HCT116 (cell line): ENCODE measurements at regions of chr11 and their contacts with region 1.

Region 1: DNA sequence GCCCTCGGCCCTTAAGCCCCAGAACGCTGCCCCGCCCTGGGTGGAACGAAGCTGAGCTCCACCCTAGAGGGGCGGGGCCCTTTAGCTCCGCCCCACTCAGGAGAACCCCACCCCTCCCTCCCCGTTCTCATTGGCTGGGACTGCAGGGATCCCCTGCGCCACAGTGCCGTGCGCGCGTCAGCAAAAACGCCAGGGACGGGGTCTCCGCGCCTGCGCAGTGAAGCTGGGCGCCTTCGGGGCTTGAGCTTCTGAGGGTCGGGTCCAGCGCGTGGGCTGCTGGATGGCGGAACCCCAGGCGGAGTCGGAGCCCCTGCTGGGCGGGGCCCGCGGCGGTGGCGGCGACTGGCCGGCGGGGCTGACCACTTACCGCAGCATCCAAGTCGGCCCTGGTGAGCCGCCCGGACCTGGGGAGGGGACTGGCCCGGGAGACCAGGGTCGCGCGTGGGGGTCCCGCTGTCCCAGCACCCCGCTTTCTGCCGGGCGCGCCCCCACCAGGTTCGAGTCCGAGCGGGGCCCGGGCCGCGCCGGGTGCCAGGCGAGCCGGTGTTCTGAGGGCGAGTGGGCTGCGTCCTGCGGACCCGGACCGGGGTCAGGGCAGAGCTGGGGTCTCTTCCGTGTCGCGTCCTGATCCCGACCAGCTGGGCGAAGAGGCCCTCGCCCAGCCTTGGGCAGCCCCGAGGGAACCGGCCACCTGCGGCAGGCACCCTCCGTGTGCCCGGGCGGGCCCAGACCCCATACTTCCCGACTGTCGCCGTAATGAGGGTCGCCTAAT is at the start of gene TPCN2:
- DNase-seq: peak; percentile 91
- ATAC-seq: peak; percentile 87
- H3K4me3 ChIP-seq: peak within 1 kb of the TSS; percentile 73 to 97
- H3K27ac ChIP-seq: peak within 1 kb of the TSS; percentile 91
- H3K4me1 ChIP-seq: peaks cover 10 to 28% of the 10 kb centered on the region in 2 experiments; a peak in 3 of 4 replicates
- H3K27me3 ChIP-seq: no peaks in the 10 kb centered on the region
- CTCF ChIP-seq: no peak
- POLR2A ChIP-seq: peak; percentile 80
- RAD21 ChIP-seq: no peak
- total RNA-seq, gene TPCN2: 15.2 TPM

Region 2: GRCh38 chr11:68621826-68622225 is 427.1 kb before region 1 on chr11:
- CTCF ChIA-PET with region 1: no interaction called
- POLR2A ChIA-PET with region 1: no interaction called
- RAD21 ChIA-PET with region 1: no interaction called
- intact Hi-C with region 1: no loop called
- DNase-seq: no peak
- ATAC-seq: no peak
- H3K4me3 ChIP-seq: no peak overlapping the region
- H3K27ac ChIP-seq: no peak overlapping the region
- H3K4me1 ChIP-seq: no peaks in the 10 kb centered on the region
- H3K27me3 ChIP-seq: no peaks in the 10 kb centered on the region
- CTCF ChIP-seq: no peak
- POLR2A ChIP-seq: no peak
- RAD21 ChIP-seq: no peak

Region 3: GRCh38 chr11:68792400-68792966 is 256.4 kb before region 1 on chr11:
- CTCF ChIA-PET with region 1: no interaction called
- POLR2A ChIA-PET with region 1: no interaction called
- RAD21 ChIA-PET with region 1: no interaction called
- intact Hi-C with region 1: no loop called
- DNase-seq: no peak
- ATAC-seq: no peak
- H3K4me3 ChIP-seq: no peak overlapping the region
- H3K27ac ChIP-seq: no peak overlapping the region
- H3K4me1 ChIP-seq: no peaks in the 10 kb centered on the region
- H3K27me3 ChIP-seq: no peaks in the 10 kb centered on the region
- CTCF ChIP-seq: no peak
- POLR2A ChIP-seq: no peak
- RAD21 ChIP-seq: no peak

Region 4: GRCh38 chr11:68903288-68904247 is 145.3 kb before region 1 on chr11 and contains the starts of genes IGHMBP2 and MRPL21:
- CTCF ChIA-PET with region 1: interaction called, 3 read pairs
- POLR2A ChIA-PET with region 1: interaction called, 3 read pairs
- RAD21 ChIA-PET with region 1: no interaction called
- intact Hi-C with region 1: loop called (anchors 2 kb)
- DNase-seq: peak; percentile 70
- ATAC-seq: peak; percentile 90
- H3K4me3 ChIP-seq: peak within 1 kb of the TSS; percentile 79 to 91
- H3K27ac ChIP-seq: peak within 1 kb of the TSS; percentile 66
- H3K4me1 ChIP-seq: peaks cover 13 to 25% of the 10 kb centered on the region in 2 experiments; a peak in 3 of 4 replicates
- H3K27me3 ChIP-seq: no peaks in the 10 kb centered on the region
- CTCF ChIP-seq: no peak
- POLR2A ChIP-seq: peak; percentile 79
- RAD21 ChIP-seq: peak; percentile 10; the same call in 1 of the 2 replicates
- total RNA-seq, gene IGHMBP2: 19.3 TPM
- total RNA-seq, gene MRPL21: 90.2 TPM

Region 5: GRCh38 chr11:68950268-68950667 is 98.6 kb before region 1 on chr11:
- CTCF ChIA-PET with region 1: interaction called, 4 read pairs
- POLR2A ChIA-PET with region 1: no interaction called
- RAD21 ChIA-PET with region 1: no interaction called
- intact Hi-C with region 1: loop called (anchors 10 kb)
- DNase-seq: peak; percentile 15
- ATAC-seq: peak; percentile 90
- H3K4me3 ChIP-seq: no peak overlapping the region
- H3K27ac ChIP-seq: no peak overlapping the region
- H3K4me1 ChIP-seq: no peaks in the 10 kb centered on the region
- H3K27me3 ChIP-seq: no peaks in the 10 kb centered on the region
- CTCF ChIP-seq: peak; percentile 17 to 52 (median 52); a peak in 5 of 6 replicates
- POLR2A ChIP-seq: no peak
- RAD21 ChIP-seq: peak; percentile 26; the same call in 1 of the 2 replicates